Posterior cingulate gyrus (tissue), 11 donors: ENCODE measurements at regions of chr15 and their contacts with region 1.

Region 1: GRCh38 chr15:70488002-70488605 is 275.3 kb downstream of the UACA start:
- DNase-seq: peak; percentile 55 to 96 (median 78)

Region 2: GRCh38 chr15:69475769-69476358 is 1012.2 kb before region 1 on chr15:
- intact Hi-C with region 1: loop called (anchors 2 kb)
- DNase-seq: peak; percentile 62 to 95 (median 85)

Region 3: DNA sequence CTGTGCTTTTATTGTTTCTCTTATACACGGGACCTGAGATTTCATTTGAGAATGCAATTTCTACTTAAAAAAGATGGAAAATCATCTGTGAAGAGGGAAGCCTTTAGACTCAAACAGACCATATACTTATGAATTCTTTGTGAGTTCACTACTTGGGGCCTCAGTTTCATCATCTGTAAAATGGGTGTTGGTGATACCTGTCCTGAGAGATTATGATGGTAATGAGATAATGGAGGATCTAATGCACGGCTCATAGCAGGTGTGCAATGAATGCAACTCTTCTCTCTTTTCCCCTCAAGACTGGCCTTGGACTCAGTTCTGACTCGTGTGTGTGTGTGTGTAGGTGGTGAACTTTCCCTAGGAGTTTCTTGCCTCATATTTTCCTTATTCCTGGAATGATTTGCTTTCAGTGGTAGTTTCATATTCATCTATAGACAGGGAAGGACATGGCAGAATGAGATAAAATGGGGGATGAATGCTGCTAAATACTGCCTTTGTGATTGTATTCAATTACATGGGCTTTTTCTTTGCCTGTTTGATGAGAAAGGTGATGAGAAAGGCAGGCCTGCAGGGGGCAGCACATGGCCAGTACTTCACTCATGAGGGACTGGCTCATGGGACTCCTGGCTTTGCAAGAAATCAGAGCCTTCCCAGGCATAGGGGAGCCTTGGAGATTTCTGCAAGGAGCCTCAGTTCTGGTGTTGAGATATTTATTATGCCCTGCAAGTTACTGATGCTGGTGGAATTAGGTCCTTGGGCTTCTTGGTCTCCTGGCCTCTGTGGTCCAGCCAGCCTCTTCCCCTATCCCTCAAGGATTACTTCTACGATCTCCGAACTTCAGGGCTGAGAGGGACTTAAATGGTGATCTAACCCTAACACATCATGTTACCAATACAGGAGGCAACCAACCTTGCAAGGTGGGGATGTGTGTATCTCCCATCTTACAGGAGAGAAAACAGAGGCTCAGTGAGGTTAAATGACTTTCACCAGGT is 964.8 kb before region 1 on chr15:
- intact Hi-C with region 1: loop called (anchors 2 kb)
- DNase-seq: peak; percentile 70 to 97 (median 89)

Region 4: GRCh38 chr15:69576035-69576526 is 912.0 kb before region 1 on chr15:
- intact Hi-C with region 1: loop called (anchors 5 kb)
- DNase-seq: peak; percentile 45 to 95 (median 70)

Region 5: GRCh38 chr15:71003319-71003718 is 515.2 kb after region 1 on chr15:
- intact Hi-C with region 1: no loop called
- DNase-seq: no peak